PC-3 (cell line): ENCODE measurements at regions of chr19 and their contacts with region 1.

Region 1: GRCh38 chr19:10695401-10696398 is 5.5 kb upstream of the QTRT1 start:
- DNase-seq: peak; percentile 97
- ATAC-seq: peak; percentile 96
- H3K4me3 ChIP-seq: no peak overlapping the region
- H3K27ac ChIP-seq: no peak overlapping the region
- H3K4me1 ChIP-seq: 0 out of 2 replicates have a peak, but pooled peaks cover 4% of the 10 kb centered on the region
- H3K27me3 ChIP-seq: no peaks in the 10 kb centered on the region
- CTCF ChIP-seq: no peak

Region 2: GRCh38 chr19:10580979-10581631 is 114.6 kb before region 1 on chr19:
- CTCF ChIA-PET with region 1: interaction called, 17 read pairs
- POLR2A ChIA-PET with region 1: no interaction called
- intact Hi-C with region 1: loop called (anchors 1 kb)
- DNase-seq: peak; percentile 98
- ATAC-seq: peak; percentile 91
- H3K4me3 ChIP-seq: no peak overlapping the region
- H3K27ac ChIP-seq: no peak overlapping the region
- H3K4me1 ChIP-seq: no peaks in the 10 kb centered on the region
- H3K27me3 ChIP-seq: no peaks in the 10 kb centered on the region
- CTCF ChIP-seq: peak; percentile 99

Region 3: DNA sequence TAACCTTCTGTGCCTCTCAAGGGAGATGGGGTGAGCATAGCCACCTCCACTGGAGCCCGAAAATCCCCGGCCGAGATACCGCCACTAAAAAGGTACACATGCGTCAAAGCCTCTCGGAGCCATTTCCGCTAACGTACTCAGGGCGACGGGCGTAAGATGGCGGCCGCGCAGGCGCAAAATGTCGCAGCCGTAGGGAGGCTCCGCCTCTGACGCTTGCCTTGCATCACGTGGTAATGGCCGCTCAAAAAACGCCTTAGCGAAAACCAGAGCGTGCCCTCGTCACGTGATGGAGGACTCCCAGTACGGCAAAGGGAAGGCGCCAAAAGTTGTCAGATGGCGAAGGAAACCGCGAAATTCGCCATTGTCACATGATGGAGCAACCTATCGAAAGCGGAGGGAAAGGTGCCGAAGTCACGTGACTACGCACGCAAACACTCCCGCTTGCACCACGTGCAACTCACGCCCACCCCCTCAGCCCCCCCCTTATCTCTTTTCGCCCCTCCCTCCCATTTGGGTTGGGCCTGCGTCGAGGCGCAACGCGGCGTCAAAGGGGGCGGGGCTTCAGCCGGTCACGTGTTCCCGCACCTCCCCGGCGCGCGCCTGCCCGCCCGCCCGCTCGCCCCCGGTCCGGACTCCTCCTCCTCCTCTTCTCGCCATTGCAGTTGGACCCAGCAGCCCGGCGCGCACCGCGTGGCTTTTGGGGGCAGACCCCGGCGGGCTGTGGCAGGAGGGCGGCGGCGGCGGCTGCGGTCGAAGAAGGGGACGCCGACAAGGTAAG is 41.8 kb before region 1 on chr19 and contains the start of gene ILF3:
- CTCF ChIA-PET with region 1: interaction called, 3 read pairs
- POLR2A ChIA-PET with region 1: interaction called, 3 read pairs
- intact Hi-C with region 1: loop called (anchors 2 kb)
- DNase-seq: peak; percentile 100
- ATAC-seq: peak; percentile 74
- H3K4me3 ChIP-seq: peak within 1 kb of the TSS; percentile 94
- H3K27ac ChIP-seq: peak within 1 kb of the TSS; percentile 88
- H3K4me1 ChIP-seq: peaks cover 19% of the 10 kb centered on the region
- H3K27me3 ChIP-seq: no peaks in the 10 kb centered on the region
- CTCF ChIP-seq: no peak
- total RNA-seq, gene ILF3: 322 and 441 TPM in 2 replicates

Region 4: DNA sequence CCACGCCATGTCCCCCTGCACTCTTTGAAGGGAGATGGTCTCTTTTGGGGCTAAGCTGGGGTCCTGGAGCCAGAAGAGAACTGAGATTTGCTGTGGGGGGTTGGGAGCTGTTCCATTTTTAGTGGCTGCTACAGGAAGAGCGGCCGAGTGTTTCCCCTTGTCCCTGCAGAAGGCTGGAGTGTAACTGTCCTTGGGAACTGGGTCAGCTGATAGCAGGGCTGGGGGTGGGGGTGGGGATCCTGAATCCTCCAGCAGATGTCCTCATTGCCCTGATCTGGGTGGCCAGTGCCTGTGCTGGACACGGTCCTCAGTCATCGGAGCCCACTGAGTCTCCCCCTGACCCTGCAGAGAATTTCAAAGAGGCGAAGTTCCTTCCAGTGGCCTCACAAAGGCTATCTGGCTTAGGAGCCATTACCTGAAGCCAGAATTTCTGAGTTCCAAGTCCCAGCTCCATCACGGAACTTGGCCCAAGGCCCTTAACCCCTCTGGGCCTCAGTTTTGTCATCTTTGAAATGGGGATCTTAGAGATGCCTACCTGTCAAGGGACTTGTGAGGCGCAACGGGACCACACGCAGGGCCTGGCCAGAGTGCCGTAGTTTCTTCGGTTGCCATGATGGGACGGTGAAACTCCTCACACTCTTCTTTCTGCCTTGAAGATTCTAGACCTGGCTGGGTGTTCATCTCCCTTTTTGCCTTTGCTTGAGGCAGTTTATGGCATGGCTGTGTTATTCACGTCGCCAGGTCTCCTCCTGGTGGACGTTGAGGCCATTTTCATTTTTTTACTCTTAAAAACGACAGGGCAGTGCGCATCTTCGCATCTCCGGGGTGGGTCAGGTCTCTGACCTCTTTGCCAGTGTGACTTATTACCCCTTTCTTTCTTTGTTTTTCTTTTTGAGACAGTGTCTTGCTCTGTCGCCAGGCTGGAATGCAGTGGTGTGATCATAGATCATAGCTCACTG is 74.1 kb after region 1 on chr19:
- CTCF ChIA-PET with region 1: interaction called, 12 read pairs
- POLR2A ChIA-PET with region 1: no interaction called
- intact Hi-C with region 1: no loop called
- DNase-seq: peak; percentile 33
- ATAC-seq: peak; percentile 45
- H3K4me3 ChIP-seq: no peak overlapping the region
- H3K27ac ChIP-seq: no peak overlapping the region
- H3K4me1 ChIP-seq: peaks cover 18% of the 10 kb centered on the region
- H3K27me3 ChIP-seq: no peaks in the 10 kb centered on the region
- CTCF ChIP-seq: peak; percentile 50; the same call in 1 of the 2 replicates